Posterior vena cava (tissue), 2 donors: ENCODE measurements at regions of chr2 and their contacts with region 1.

Region 1: DNA sequence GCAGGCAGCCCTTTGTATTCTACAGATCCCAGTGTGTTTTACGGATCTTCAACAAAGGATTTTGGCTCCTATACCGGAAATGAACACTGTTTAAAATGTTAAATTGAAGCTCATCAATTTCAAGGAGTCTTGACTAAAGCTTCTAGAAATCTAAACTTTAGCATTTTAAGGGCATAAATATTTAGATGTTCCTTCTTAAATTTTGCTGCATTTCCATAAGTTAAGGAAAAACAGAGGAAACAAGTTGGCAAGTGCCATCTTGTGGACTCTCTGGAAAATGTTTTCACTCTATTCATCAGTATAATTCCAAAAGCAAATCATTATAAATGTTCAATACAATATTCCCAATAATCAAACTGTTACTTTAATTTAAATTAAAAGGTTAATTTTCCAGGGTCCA is 19.6 kb downstream of the CHN1 start:
- DNase-seq: no peak

Region 2: GRCh38 chr2:174688079-174688478 is 297.6 kb before region 1 on chr2:
- intact Hi-C with region 1: no loop called
- DNase-seq: no peak

Region 3: GRCh38 chr2:174748948-174749347 is 236.7 kb before region 1 on chr2:
- intact Hi-C with region 1: no loop called
- DNase-seq: no peak

Region 4: DNA sequence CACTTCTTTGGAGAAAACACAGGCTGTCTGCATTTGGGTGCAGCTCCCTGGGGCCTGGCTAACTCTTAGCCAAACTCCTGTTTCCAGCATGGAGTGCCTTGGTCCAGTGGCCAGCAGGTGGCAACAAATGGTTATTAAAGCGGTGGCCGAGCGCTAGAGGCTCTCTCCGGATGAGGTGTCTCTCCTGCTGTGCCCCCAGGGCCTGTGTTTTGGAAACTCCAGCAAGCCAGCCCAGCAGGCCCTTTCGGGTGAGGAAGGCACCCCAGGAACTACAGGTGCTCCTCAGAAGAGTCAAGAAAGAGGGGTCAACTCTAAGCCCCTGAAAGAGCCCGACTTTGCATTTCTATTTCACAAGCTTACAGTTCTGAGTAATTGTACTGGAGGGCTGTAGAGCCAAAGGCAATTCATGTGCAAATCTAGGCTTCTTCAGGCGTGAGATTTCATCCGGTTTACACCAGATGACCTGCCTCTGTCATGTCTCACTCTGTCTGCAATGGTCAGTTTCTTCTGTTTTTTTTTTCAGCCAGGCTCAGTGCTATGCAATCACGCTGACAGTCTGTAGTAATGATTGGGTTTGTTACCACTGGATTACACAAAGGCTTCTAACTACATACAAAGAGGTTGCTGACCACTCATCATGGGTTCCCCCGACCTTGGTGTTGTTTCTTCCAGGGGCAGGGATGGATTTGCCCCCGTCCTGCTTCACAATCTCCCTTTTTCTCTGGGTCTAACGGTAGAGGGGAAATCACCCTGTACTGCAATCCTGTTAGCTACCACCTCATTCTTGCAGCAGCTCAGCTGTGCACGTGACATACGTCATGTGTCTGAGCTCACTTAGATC is 213.8 kb before region 1 on chr2:
- intact Hi-C with region 1: loop called (anchors 5 to 10 kb)
- DNase-seq: peak; percentile 90

Region 5: DNA sequence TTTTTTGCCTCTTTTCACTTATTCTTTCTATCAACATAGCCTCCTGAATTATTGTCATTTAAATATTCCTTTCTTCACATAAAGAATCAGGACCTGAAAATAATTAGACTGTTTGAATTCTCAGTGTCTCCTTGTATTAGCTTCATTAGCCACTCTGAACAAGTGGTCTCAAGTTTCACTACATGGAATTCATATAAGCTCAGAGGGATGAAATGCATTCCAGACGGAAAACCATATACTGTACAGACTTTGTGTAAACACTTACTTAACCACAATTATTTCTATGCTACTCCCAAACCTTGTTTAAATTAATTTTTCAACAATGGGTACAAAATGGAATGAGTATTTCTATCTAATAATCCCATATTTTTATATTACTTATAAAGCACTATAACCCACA is 33.9 kb before region 1 on chr2:
- intact Hi-C with region 1: no loop called
- DNase-seq: no peak